T-cell (primary cell): ENCODE measurements at regions of chr13 and their contacts with region 1.

Region 1: DNA sequence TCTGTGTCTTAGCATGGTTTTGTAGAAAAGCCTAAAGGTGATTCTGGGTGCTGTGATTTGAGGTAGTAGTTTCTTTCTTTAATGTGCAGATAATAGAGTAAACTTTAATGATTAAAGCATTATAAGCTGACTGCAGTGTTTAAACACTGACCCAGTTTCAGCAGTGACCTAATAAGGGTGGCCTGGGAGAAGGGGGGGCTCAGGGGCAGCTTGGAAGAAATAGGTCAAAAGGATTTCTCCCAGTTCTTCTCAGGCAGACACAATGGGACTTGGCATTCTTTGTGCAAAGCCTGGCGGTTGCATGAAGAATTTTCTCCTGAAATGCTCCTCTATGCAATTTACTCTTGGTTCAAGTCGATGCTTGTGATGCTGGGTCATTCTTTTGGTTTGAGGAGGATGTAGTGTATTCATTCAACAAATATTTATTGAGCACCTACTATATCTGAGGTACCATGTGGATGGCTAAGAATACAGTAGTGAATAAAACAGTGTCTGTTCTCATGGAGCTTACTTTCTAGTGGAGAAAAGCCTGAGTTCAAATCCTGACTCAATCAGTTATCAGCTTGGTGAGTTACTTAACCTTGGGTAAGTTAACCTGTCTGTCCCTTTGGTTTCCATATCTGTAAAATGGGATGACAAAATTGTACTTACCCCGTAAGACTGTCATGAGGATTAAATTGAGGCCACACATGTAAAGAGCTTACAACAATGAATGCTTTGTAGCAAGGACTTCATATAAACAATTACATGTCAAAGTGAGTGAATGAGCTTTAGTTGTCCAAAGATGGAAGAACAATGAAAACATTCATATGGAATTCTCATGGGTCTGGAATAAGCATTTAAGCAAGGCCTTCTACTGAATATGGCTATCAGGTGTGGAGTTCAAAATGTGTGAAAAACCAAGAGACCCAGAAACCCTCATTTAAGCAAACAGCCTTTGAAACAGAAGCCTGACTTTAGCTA is 210.2 kb downstream of the KCNRG start:
- DNase-seq: no peak
- ATAC-seq: no peak
- H3K4me3 ChIP-seq: no peak overlapping the region
- H3K4me3 Mint-ChIP-seq: no peak overlapping the region
- H3K27ac ChIP-seq: no peak overlapping the region
- H3K27ac Mint-ChIP-seq: no peak overlapping the region
- H3K4me1 ChIP-seq: peaks cover 0 to 9% of the 10 kb centered on the region in 2 experiments
- H3K4me1 Mint-ChIP-seq: peaks cover 17 to 67% (median 28%) of the 10 kb centered on the region in 3 donors
- H3K27me3 ChIP-seq: peaks cover 0 to 4% of the 10 kb centered on the region in 2 experiments
- H3K27me3 Mint-ChIP-seq: no peaks in the 10 kb centered on the region

Region 2: GRCh38 chr13:49669735-49670309 is 555.7 kb before region 1 on chr13:
- CTCF ChIA-PET with region 1: no interaction called
- POLR2A ChIA-PET with region 1: no interaction called
- DNase-seq: peak in 7 of 35 experiments; percentile 4 to 48 (median 11)
- ATAC-seq: peak; percentile 53 to 66 (median 58)
- H3K4me3 ChIP-seq: no peak overlapping the region
- H3K4me3 Mint-ChIP-seq: no peak overlapping the region
- H3K27ac ChIP-seq: no peak overlapping the region
- H3K27ac Mint-ChIP-seq: no peak overlapping the region
- H3K4me1 ChIP-seq: no peaks in the 10 kb centered on the region
- H3K4me1 Mint-ChIP-seq: no peaks in the 10 kb centered on the region
- H3K27me3 ChIP-seq: no peaks in the 10 kb centered on the region
- H3K27me3 Mint-ChIP-seq: no peaks in the 10 kb centered on the region

Region 3: GRCh38 chr13:50236898-50237318 is 11.4 kb after region 1 on chr13:
- CTCF ChIA-PET with region 1: interaction called in 1 of 2 experiments, 4 read pairs
- POLR2A ChIA-PET with region 1: interaction called in 1 of 2 experiments, 10 read pairs
- DNase-seq: peak in 18 of 35 experiments; percentile 4 to 75 (median 18)
- ATAC-seq: peak; percentile 80 to 93 (median 81)
- H3K4me3 ChIP-seq: peak overlapping the region in 1 of 2 donors; percentile 32
- H3K4me3 Mint-ChIP-seq: peak overlapping the region; percentile 57 to 78 (median 77)
- H3K27ac ChIP-seq: peak overlapping the region; percentile 70
- H3K27ac Mint-ChIP-seq: peak overlapping the region; percentile 84 to 96
- H3K4me1 ChIP-seq: peaks cover 0 to 6% of the 10 kb centered on the region in 2 experiments
- H3K4me1 Mint-ChIP-seq: peaks cover 36 to 49% (median 42%) of the 10 kb centered on the region in 3 donors
- H3K27me3 ChIP-seq: no peaks in the 10 kb centered on the region
- H3K27me3 Mint-ChIP-seq: no peaks in the 10 kb centered on the region